CD4-positive, alpha-beta memory T cell (primary cell): ENCODE measurements at regions of chr4 and their contacts with region 1.

Region 1: GRCh38 chr4:76377911-76378310 is 43.0 kb downstream of the CCDC158 start:
- DNase-seq: peak in 4 of 5 donors; percentile 24 to 49 (median 32)
- H3K4me3 ChIP-seq: no peak overlapping the region
- H3K4me3 Mint-ChIP-seq: no peak overlapping the region
- H3K27ac ChIP-seq: no peak overlapping the region
- H3K27ac Mint-ChIP-seq: no peak overlapping the region
- H3K4me1 ChIP-seq: no peaks in the 10 kb centered on the region
- H3K4me1 Mint-ChIP-seq: peaks cover 0 to 2% (median under 1%) of the 10 kb centered on the region in 4 donors
- H3K27me3 ChIP-seq: no peaks in the 10 kb centered on the region
- H3K27me3 Mint-ChIP-seq: peaks cover 0 to 9% of the 10 kb centered on the region in 2 donors

Region 2: GRCh38 chr4:76251441-76252270 is 126.3 kb before region 1 on chr4 and contains the start of gene FAM47E:
- CTCF ChIA-PET with region 1: interaction called, 78 read pairs
- POLR2A ChIA-PET with region 1: no interaction called
- intact Hi-C with region 1: loop called (anchors 1 kb)
- DNase-seq: peak; percentile 33 to 41 (median 34)
- H3K4me3 ChIP-seq: peak within 1 kb of the TSS in 1 of 2 donors; percentile 47
- H3K4me3 Mint-ChIP-seq: peak within 1 kb of the TSS; percentile 71 to 89 (median 84)
- H3K27ac ChIP-seq: no peak within 1 kb of the TSS
- H3K27ac Mint-ChIP-seq: peak within 1 kb of the TSS in 3 of 7 donors; percentile 37 to 69 (median 44)
- H3K4me1 ChIP-seq: peaks cover 6% of the 10 kb centered on the region
- H3K4me1 Mint-ChIP-seq: peaks cover 3 to 8% (median 6%) of the 10 kb centered on the region in 4 donors
- H3K27me3 ChIP-seq: peaks cover 43% of the 10 kb centered on the region
- H3K27me3 Mint-ChIP-seq: peaks cover 48 to 51% of the 10 kb centered on the region in 2 donors
- total RNA-seq, gene FAM47E: 0.64 TPM in 1 of 2 experiments, not detected in the other

Region 3: DNA sequence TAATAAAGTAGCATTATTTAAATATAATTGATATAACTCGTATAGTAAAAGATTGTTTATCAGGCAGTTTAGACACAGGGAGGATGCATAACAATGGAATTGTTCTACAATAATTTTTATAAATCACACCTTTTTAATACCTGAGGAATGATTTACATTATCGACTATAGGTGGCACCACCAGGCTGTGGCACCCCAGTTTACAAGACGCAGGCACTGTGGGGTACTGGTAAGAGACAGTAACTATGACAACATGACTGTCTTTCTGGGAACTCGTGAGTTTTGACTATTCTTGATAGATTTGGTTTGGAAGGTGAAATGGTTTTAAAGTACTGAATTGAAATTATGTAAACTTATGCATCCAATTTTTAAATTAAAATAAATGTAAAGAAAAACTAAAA is 98.4 kb before region 1 on chr4:
- CTCF ChIA-PET with region 1: interaction called, 7 read pairs
- POLR2A ChIA-PET with region 1: no interaction called
- intact Hi-C with region 1: loop called (anchors 1 kb)
- DNase-seq: peak in 4 of 5 donors; percentile 26 to 49 (median 46)
- H3K4me3 ChIP-seq: no peak overlapping the region
- H3K4me3 Mint-ChIP-seq: no peak overlapping the region
- H3K27ac ChIP-seq: no peak overlapping the region
- H3K27ac Mint-ChIP-seq: no peak overlapping the region
- H3K4me1 ChIP-seq: no peaks in the 10 kb centered on the region
- H3K4me1 Mint-ChIP-seq: peaks cover 0 to 4% (median under 1%) of the 10 kb centered on the region in 4 donors
- H3K27me3 ChIP-seq: no peaks in the 10 kb centered on the region
- H3K27me3 Mint-ChIP-seq: peaks cover 5 to 10% of the 10 kb centered on the region in 2 donors

Region 4: GRCh38 chr4:76305971-76306881 is 71.7 kb before region 1 on chr4 and contains the start of gene STBD1:
- CTCF ChIA-PET with region 1: interaction called, 66 read pairs
- POLR2A ChIA-PET with region 1: no interaction called
- intact Hi-C with region 1: loop called (anchors 10 kb)
- DNase-seq: peak; percentile 24 to 43 (median 32)
- H3K4me3 ChIP-seq: peak within 1 kb of the TSS; percentile 30 to 68
- H3K4me3 Mint-ChIP-seq: peak within 1 kb of the TSS; percentile 81 to 93 (median 86)
- H3K27ac ChIP-seq: peak within 1 kb of the TSS; percentile 34
- H3K27ac Mint-ChIP-seq: peak within 1 kb of the TSS; percentile 12 to 83 (median 60)
- H3K4me1 ChIP-seq: peaks cover 39% of the 10 kb centered on the region
- H3K4me1 Mint-ChIP-seq: peaks cover 29 to 54% (median 41%) of the 10 kb centered on the region in 4 donors
- H3K27me3 ChIP-seq: no peaks in the 10 kb centered on the region
- H3K27me3 Mint-ChIP-seq: no peaks in the 10 kb centered on the region
- total RNA-seq, gene STBD1: 3.6 to 3.8 TPM

Region 5: DNA sequence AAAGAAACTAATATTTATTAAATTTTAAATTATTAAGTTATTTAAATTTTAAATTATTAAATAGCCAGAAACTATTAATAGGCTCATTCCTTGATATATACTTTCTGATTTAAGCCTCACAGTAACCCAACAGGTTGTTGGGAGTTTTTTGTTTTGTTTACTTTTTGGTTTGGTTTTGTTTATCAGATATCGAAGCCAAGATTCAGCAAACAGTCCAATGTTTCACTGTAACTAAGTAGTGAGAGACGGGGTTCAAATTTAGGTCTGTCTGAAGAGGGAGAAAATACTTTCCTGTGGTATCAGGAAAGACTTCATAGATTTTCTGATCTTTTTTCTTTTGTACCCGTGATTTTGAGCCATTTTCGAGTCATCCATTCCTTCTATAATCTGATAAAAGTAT is 11.2 kb before region 1 on chr4:
- CTCF ChIA-PET with region 1: interaction called, 17 read pairs
- POLR2A ChIA-PET with region 1: no interaction called
- intact Hi-C with region 1: no loop called
- DNase-seq: no peak
- H3K4me3 ChIP-seq: no peak overlapping the region
- H3K4me3 Mint-ChIP-seq: no peak overlapping the region
- H3K27ac ChIP-seq: no peak overlapping the region
- H3K27ac Mint-ChIP-seq: no peak overlapping the region
- H3K4me1 ChIP-seq: no peaks in the 10 kb centered on the region
- H3K4me1 Mint-ChIP-seq: no peaks in the 10 kb centered on the region
- H3K27me3 ChIP-seq: no peaks in the 10 kb centered on the region
- H3K27me3 Mint-ChIP-seq: peaks cover 14 to 15% of the 10 kb centered on the region in 2 donors